GM13976 (cell line): ENCODE measurements at regions of chr13 and their contacts with region 1.

Region 1: DNA sequence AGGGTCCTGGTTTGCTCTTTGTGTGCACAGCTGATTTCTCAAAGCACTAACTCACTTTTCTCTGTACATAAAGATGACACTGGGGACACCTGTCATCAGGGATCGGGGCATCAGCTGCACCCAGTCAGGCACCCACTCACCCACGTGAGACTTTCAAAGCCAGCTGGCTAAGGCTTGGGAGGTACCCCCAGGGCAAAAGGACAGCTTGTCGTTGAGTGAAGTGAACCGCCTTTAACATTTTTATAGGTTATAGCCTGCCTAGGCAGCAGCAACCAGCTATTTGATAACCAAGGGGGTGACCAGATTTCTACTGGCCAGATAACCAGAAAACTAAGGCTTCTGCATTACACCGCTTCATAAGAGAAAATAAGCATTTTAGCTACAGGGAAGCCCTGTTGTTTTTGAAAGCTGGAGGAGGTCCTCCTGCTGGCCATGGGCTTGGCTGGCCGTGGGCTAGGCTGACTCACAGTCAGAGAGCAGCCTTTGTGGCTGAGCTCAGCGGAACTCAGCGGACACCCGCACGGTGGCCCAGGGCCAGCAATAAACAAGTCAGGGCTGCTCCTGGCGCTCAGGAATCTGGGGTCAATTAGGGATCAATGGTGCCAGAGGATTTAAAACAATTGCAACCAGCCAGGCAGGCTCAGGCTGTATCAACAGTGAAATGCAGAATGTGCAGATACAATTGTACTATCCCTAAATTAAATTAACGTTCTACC is 57.1 kb downstream of the ALOX5AP start:
- DNase-seq: no peak
- CTCF ChIP-seq: no peak

Region 2: DNA sequence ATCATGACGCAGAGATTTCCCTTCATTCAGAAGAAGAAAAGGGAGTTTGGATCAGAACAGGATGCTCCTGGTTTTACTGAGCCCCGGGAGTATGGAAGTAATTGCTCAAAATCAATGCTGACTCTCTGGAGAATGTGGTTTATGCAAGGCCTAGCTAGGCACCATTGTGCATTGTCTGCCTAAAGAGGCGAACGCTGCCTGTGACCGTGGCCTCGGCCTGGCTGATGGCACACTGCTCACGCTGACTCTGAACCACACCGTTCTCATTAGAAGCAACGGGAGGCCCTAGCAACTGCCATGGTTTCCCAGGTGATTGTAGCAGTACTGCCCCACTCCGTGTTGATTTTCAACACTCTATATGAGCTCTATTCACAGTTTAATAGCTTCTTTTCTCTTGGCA is 900.3 kb before region 1 on chr13:
- in situ Hi-C with region 1: no loop called
- DNase-seq: no peak
- CTCF ChIP-seq: no peak

Region 3: DNA sequence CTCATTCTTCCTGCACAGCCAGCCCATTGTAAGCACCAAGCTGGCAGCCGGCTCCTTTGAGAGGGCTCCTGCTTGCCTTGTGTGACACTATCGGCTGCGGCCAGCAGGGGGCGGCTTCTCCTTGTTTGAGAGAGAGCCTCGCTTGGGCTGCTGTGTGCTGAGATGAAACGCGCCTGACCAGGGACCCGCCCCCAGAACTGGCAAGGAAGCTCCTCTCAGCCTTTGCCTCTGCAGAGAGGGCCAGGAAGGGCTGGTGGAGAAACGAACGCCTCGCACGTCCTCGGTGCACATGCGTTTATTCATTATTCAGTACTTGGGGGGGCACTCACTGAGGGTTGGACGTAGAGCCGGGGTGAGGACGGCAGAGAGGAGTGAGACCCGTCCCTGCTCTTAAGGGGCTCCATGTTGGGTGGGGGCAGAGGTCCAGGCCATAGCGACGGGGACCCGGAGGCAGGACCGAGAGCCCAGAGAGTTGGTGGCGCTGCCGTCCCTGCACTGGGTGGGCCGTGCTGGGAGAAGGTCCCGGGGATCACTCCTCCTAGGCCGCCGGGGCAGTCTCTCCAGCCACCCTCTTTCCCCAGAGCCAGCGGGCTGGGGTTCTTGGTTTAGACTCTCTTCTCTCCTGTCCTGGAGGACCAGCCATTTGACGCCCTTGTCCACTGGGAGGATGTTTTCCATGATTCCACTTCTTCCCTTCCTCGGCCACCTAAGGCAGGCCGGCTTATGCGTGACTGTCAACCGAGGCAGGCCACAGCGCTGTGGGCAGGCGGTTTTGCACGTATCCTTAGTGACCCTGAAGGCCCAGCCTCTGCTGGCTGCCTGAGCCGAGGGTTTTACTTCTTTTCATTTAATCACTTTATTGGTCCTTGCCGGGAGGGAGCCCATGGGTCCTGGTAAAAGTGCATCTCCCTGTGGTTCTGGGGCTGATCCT is 659.6 kb before region 1 on chr13:
- in situ Hi-C with region 1: loop called (anchors 25 kb)
- DNase-seq: peak; percentile 91
- CTCF ChIP-seq: peak; percentile 95

Region 4: GRCh38 chr13:30679483-30680330 is 112.7 kb before region 1 on chr13:
- in situ Hi-C with region 1: loop called (anchors 10 kb)
- DNase-seq: peak; percentile 56
- CTCF ChIP-seq: peak; percentile 46

Region 5: GRCh38 chr13:30847650-30848307 is 55.3 kb after region 1 on chr13:
- in situ Hi-C with region 1: no loop called
- DNase-seq: no peak
- CTCF ChIP-seq: no peak